ENCODE measurements at regions of chr1 and their contacts with region 1.

Region 1: GRCh38 chr1:15128520-15129313 is 24.8 kb upstream of the TMEM51 start:
- DNase-seq: peak; percentile 44 to 76 (median 63)
- ATAC-seq: peak; percentile 69
- H3K4me3 ChIP-seq: no peak overlapping the region
- H3K4me3 Mint-ChIP-seq: no peak overlapping the region
- H3K27ac ChIP-seq: no peak overlapping the region
- H3K27ac Mint-ChIP-seq: no peak overlapping the region
- H3K4me1 ChIP-seq: no peaks in the 10 kb centered on the region
- H3K4me1 Mint-ChIP-seq: no peaks in the 10 kb centered on the region
- H3K27me3 ChIP-seq: no peaks in the 10 kb centered on the region
- H3K27me3 Mint-ChIP-seq: peaks cover 8% of the 10 kb centered on the region
- CTCF ChIP-seq: peak; percentile 75

Region 2: GRCh38 chr1:15090373-15090772 is 38.3 kb before region 1 on chr1:
- CTCF ChIA-PET with region 1: no interaction called
- POLR2A ChIA-PET with region 1: no interaction called
- intact Hi-C with region 1: no loop called
- DNase-seq: peak in 1 of 9 experiments; percentile 20
- ATAC-seq: no peak
- H3K4me3 ChIP-seq: no peak overlapping the region
- H3K4me3 Mint-ChIP-seq: no peak overlapping the region
- H3K27ac ChIP-seq: no peak overlapping the region
- H3K27ac Mint-ChIP-seq: no peak overlapping the region
- H3K4me1 ChIP-seq: no peaks in the 10 kb centered on the region
- H3K4me1 Mint-ChIP-seq: peaks cover 7% of the 10 kb centered on the region
- H3K27me3 ChIP-seq: no peaks in the 10 kb centered on the region
- H3K27me3 Mint-ChIP-seq: no peaks in the 10 kb centered on the region
- CTCF ChIP-seq: no peak

Region 3: GRCh38 chr1:15188130-15188524 is 59.4 kb after region 1 on chr1:
- CTCF ChIA-PET with region 1: no interaction called
- POLR2A ChIA-PET with region 1: no interaction called
- intact Hi-C with region 1: no loop called
- DNase-seq: no peak
- ATAC-seq: no peak
- H3K4me3 ChIP-seq: no peak overlapping the region
- H3K4me3 Mint-ChIP-seq: no peak overlapping the region
- H3K27ac ChIP-seq: no peak overlapping the region
- H3K27ac Mint-ChIP-seq: no peak overlapping the region
- H3K4me1 ChIP-seq: no peaks in the 10 kb centered on the region
- H3K4me1 Mint-ChIP-seq: no peaks in the 10 kb centered on the region
- H3K27me3 ChIP-seq: no peaks in the 10 kb centered on the region
- H3K27me3 Mint-ChIP-seq: peaks cover 10% of the 10 kb centered on the region
- CTCF ChIP-seq: no peak

Region 4: GRCh38 chr1:15272009-15272788 is 143.5 kb after region 1 on chr1:
- CTCF ChIA-PET with region 1: interaction called, 14 read pairs
- POLR2A ChIA-PET with region 1: no interaction called
- intact Hi-C with region 1: loop called in 1 of 2 experiments (anchors 1 kb)
- DNase-seq: peak in 3 of 9 experiments; percentile 18 to 63 (median 48)
- ATAC-seq: peak; percentile 46
- H3K4me3 ChIP-seq: no peak overlapping the region
- H3K4me3 Mint-ChIP-seq: no peak overlapping the region
- H3K27ac ChIP-seq: no peak overlapping the region
- H3K27ac Mint-ChIP-seq: no peak overlapping the region
- H3K4me1 ChIP-seq: no peaks in the 10 kb centered on the region
- H3K4me1 Mint-ChIP-seq: peaks cover 2% of the 10 kb centered on the region
- H3K27me3 ChIP-seq: peaks cover 0 to 5% of the 10 kb centered on the region in 2 experiments
- H3K27me3 Mint-ChIP-seq: peaks cover 34% of the 10 kb centered on the region
- CTCF ChIP-seq: peak; percentile 46

Region 5: GRCh38 chr1:15304701-15305467 is 176.2 kb after region 1 on chr1:
- CTCF ChIA-PET with region 1: interaction called, 49 read pairs
- POLR2A ChIA-PET with region 1: no interaction called
- intact Hi-C with region 1: loop called in 1 of 2 experiments (anchors 1 kb)
- DNase-seq: peak; percentile 33 to 79 (median 70)
- ATAC-seq: no peak
- H3K4me3 ChIP-seq: no peak overlapping the region
- H3K4me3 Mint-ChIP-seq: no peak overlapping the region
- H3K27ac ChIP-seq: no peak overlapping the region
- H3K27ac Mint-ChIP-seq: no peak overlapping the region
- H3K4me1 ChIP-seq: no peaks in the 10 kb centered on the region
- H3K4me1 Mint-ChIP-seq: no peaks in the 10 kb centered on the region
- H3K27me3 ChIP-seq: no peaks in the 10 kb centered on the region
- H3K27me3 Mint-ChIP-seq: peaks cover 2% of the 10 kb centered on the region
- CTCF ChIP-seq: peak; percentile 93

Region 6: GRCh38 chr1:15430787-15431570 is 302.3 kb after region 1 on chr1:
- CTCF ChIA-PET with region 1: no interaction called
- POLR2A ChIA-PET with region 1: no interaction called
- intact Hi-C with region 1: loop called (anchors 1 to 5 kb)
- DNase-seq: peak; percentile 65 to 87 (median 78)
- ATAC-seq: peak; percentile 81
- H3K4me3 ChIP-seq: no peak overlapping the region
- H3K4me3 Mint-ChIP-seq: no peak overlapping the region
- H3K27ac ChIP-seq: peak overlapping the region in 1 of 2 experiments; percentile 31
- H3K27ac Mint-ChIP-seq: peak overlapping the region; percentile 10
- H3K4me1 ChIP-seq: no peaks in the 10 kb centered on the region
- H3K4me1 Mint-ChIP-seq: no peaks in the 10 kb centered on the region
- H3K27me3 ChIP-seq: no peaks in the 10 kb centered on the region
- H3K27me3 Mint-ChIP-seq: no peaks in the 10 kb centered on the region
- CTCF ChIP-seq: peak; percentile 98